Activated CD4-positive, alpha-beta T cell treated with anti-CD3 and anti-CD28 coated beads for 36 hours (primary cell): ENCODE measurements at regions of chr19 and their contacts with region 1.

Region 1: DNA sequence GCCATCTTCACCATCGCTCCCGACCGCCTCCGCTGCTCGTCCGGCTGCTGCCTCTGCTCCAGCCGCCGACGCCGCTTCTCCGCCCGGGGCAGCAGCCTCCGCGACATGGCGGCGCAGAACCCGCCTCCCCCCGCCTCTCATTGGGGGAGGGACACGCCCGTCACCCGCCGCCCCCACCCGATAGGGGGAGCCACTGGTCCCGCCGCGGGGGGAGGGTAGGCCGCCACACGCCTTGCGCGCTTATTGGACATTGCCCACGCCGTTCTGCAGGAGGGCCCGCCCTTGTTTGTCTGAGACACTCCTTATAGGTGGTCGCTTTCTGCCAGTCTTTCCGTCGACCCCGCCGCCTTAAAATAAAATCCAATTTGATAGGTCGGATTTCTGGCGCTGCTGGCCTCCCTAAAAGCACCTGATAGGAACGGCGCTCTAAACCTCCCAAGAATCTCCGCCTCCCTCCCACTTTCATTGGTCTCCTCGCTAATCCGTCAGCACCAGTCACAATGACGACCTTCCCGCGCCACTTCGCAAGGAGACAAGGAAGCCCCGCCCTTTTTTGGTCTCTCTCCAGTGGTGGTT is at the start of gene HNRNPL:
- DNase-seq: peak; percentile 99
- ATAC-seq: peak; percentile 71
- H3K4me3 Mint-ChIP-seq: peak within 1 kb of the TSS; percentile 97
- H3K27ac Mint-ChIP-seq: peak within 1 kb of the TSS; percentile 99
- H3K4me1 Mint-ChIP-seq: peaks cover 42% of the 10 kb centered on the region
- H3K27me3 Mint-ChIP-seq: no peaks in the 10 kb centered on the region
- total RNA-seq, gene HNRNPL: 714 to 722 TPM

Region 2: GRCh38 chr19:38387550-38388348 is 462.2 kb before region 1 on chr19 and contains the start of gene GGN:
- CTCF ChIA-PET with region 1: no interaction called
- POLR2A ChIA-PET with region 1: no interaction called
- intact Hi-C with region 1: loop called in 1 of 2 experiments (anchors 1 kb)
- DNase-seq: peak; percentile 94
- ATAC-seq: peak; percentile 81
- H3K4me3 Mint-ChIP-seq: peak within 1 kb of the TSS; percentile 75
- H3K27ac Mint-ChIP-seq: peak within 1 kb of the TSS; percentile 76
- H3K4me1 Mint-ChIP-seq: peaks cover 26% of the 10 kb centered on the region
- H3K27me3 Mint-ChIP-seq: peaks cover 14% of the 10 kb centered on the region
- total RNA-seq, gene GGN: 0.30 to 0.51 TPM

Region 3: DNA sequence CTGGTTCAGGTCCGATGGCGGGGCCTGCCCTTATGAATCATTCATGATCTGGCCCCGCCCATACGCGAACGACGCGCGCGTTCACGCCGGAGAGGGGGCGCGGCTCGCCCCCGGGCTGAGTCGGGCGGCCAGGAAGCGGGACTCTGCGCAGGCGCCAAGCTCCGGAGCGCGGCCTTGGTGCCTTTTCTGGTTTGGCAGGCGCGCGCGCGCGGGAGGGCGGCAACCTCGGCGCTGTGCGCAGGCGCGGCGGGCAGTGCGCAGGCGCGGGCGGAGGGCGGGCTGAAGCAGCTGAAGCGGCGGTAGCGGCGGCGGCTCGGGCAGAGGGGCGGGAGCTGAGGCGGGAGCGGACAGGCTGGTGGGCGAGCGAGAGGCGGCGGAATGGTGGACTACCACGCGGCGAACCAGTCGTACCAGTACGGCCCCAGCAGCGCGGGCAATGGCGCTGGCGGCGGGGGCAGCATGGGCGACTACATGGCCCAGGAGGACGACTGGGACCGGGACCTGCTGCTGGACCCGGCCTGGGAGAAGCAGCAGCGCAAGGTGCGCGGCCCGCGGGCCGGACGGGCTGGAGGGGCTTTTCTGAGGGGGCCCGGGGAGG is 202.5 kb before region 1 on chr19 and contains the start of gene ACTN4:
- CTCF ChIA-PET with region 1: no interaction called
- POLR2A ChIA-PET with region 1: interaction called, 6 read pairs
- intact Hi-C with region 1: loop called in 1 of 2 experiments (anchors 1 kb)
- DNase-seq: peak; percentile 100
- ATAC-seq: peak; percentile 92
- H3K4me3 Mint-ChIP-seq: peak within 1 kb of the TSS; percentile 98
- H3K27ac Mint-ChIP-seq: peak within 1 kb of the TSS; percentile 81
- H3K4me1 Mint-ChIP-seq: peaks cover 39% of the 10 kb centered on the region
- H3K27me3 Mint-ChIP-seq: peaks cover 10% of the 10 kb centered on the region
- total RNA-seq, gene ACTN4: 181 to 182 TPM

Region 4: DNA sequence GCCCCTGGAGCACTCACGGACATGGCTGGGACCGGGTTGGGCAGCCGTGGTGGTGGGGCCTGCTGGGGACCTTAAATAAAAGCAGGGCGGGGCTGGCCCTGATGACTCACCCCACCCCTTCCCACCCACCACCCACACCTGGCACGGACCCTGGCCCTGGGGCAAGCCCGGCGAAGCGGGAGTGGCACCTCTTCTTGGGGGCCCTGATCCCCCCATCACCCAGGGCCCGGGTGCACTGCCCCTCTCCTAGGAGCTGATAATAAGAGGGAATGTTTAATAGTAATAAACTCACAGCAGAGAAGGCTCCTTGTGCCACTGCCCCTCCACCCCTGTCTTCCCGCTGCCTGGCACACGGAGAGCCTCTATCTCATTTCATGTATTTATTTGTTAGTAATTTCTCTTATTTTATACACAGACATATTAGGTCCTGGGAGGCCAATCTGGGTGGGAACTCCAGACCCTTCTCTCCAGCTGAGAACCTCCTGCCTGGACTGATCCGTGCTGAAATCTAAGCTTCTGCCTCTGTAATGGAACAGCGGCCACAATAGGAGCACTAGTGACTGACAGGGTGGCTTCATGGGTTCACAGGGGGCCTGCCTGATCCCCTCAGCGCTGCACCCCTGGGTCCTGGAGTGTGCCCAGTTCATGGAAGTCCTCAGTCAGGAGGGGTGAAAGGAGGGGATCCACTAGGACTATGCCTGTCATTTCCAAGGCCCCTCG is 76.3 kb before region 1 on chr19 and contains the start of gene LGALS7:
- CTCF ChIA-PET with region 1: no interaction called
- POLR2A ChIA-PET with region 1: no interaction called
- intact Hi-C with region 1: no loop called
- DNase-seq: no peak
- ATAC-seq: no peak
- H3K4me3 Mint-ChIP-seq: no peak within 1 kb of the TSS
- H3K27ac Mint-ChIP-seq: no peak within 1 kb of the TSS
- H3K4me1 Mint-ChIP-seq: peaks cover 6% of the 10 kb centered on the region
- H3K27me3 Mint-ChIP-seq: no peaks in the 10 kb centered on the region
- total RNA-seq, gene LGALS7: not detected

Region 5: DNA sequence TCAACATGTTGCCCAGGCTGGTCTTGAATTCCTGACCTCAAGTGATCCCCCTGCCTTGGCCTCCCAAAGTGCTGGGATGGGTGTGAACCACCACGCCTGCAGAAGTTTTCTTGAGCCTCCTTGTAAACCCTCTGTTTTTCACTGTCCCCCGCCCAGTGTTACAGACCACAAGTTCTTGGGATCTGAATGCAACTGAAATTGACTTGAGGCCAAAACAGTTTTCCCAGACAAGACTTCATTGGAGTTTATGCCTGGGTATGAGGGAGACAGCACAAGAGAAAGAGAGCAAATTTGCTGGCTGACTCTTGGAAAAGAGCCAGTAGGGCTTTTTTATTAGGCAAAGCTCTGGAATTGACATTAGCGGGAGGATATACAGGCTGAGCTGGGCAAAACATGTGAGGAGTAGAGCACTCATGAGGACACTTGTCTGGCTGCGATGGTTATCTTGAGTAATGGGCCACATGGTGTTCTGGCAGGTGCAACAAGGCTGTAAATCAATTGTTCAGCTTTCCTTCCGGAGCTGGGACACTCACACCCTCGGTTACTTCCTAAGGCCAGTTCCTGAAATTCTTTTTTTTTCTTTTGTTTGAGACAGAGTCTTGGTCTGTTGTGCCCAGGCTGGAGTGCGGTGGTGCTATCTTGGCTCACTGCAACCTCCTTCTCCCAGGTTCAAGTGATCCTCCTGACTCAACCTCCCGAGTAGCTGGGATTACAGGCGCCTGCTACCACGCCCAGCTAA is 12.5 kb after region 1 on chr19:
- CTCF ChIA-PET with region 1: interaction called, 10 read pairs
- POLR2A ChIA-PET with region 1: interaction called, 10 read pairs
- intact Hi-C with region 1: loop called in 1 of 2 experiments (anchors 1 kb)
- DNase-seq: no peak
- ATAC-seq: no peak
- H3K4me3 Mint-ChIP-seq: no peak overlapping the region
- H3K27ac Mint-ChIP-seq: no peak overlapping the region
- H3K4me1 Mint-ChIP-seq: peaks cover 36% of the 10 kb centered on the region
- H3K27me3 Mint-ChIP-seq: no peaks in the 10 kb centered on the region

Region 6: DNA sequence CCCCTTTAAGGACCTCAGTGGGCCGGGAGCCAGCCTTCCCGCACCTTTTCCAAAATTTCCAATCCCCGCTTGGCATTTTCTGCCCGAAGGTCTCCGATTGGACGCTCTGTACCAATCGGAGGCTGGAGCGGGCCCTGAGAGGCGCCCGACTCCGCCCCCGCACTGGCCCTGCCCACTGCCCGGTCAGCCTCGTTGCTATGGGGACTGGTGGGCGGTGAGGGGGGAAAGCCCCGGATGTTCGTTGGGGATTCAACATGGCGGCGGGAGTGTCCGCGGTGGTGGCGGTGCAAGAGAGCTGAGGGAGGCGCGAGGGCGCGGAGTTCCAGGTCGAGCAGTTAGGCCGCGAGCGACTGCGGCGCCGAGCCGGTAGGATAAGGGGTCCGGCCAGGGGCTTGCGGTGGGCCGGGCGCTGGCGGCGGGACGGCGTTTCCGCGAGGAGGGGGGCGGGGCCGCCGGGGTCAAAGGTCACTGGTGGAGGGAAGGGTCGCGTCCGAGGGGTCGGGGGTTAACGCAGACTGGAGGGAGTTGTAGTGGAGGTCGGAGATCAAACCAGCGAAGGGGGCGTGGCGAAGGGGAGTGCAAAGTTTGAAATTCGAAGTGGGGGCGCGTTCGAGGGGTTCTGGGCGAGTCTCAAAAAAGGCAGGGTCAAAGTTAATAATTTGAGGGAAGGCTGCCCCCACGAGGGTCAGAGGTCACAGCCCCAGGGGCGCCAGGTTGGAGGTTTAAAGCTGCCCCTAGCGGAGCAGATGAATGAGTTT is 275.8 kb after region 1 on chr19 and contains the start of gene PAK4:
- CTCF ChIA-PET with region 1: no interaction called
- POLR2A ChIA-PET with region 1: no interaction called
- intact Hi-C with region 1: loop called in 1 of 2 experiments (anchors 5 kb)
- DNase-seq: peak; percentile 99
- ATAC-seq: peak; percentile 94
- H3K4me3 Mint-ChIP-seq: peak within 1 kb of the TSS; percentile 82
- H3K27ac Mint-ChIP-seq: peak within 1 kb of the TSS; percentile 90
- H3K4me1 Mint-ChIP-seq: peaks cover 25% of the 10 kb centered on the region
- H3K27me3 Mint-ChIP-seq: no peaks in the 10 kb centered on the region
- total RNA-seq, gene PAK4: 14.2 to 22.6 TPM